ENCODE measurements at regions of chr3 and their contacts with region 1.

Region 1: DNA sequence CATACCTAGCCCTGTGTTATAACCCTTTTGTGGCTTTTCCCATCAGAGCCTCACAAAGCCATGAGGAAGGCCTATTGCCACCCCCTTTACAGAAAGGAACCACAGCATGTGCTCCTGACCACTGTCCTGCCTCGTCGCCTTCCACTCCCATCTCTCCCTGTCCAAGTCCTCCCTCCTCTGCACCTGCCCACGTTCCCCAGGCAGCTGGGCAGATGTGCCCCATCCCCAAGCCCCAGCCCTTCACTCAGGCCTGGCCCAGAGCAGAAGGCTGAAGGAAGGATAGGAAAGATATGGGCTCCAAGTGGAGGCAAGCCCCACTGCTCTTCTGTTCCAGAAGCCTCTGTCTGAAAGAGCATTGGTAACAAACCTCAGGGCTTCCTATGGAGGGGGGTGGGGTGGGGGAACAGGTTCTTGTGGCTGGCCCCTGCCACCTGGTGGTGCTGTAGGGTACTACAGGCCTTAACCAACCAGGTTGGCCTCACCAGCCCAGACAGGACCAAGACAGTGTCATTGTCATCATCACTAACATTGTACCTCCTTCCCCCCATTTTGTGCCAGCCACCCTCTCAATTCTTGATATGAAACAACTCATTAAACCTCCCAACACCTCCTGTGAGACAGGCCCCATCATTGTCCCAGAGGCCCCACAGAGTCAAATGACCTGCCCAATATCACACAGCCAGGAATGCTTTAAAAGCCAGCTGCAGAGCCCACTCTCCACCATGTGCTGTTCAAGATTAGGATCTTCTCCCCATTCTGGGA is 10.0 kb downstream of the POC1A start:
- DNase-seq: peak; percentile 89
- ATAC-seq: peak; percentile 93
- H3K4me3 ChIP-seq: no peak overlapping the region
- H3K27ac ChIP-seq: no peak overlapping the region
- H3K4me1 ChIP-seq: peaks cover 5% of the 10 kb centered on the region
- H3K27me3 ChIP-seq: no peaks in the 10 kb centered on the region
- CTCF ChIP-seq: peak; percentile 95

Region 2: DNA sequence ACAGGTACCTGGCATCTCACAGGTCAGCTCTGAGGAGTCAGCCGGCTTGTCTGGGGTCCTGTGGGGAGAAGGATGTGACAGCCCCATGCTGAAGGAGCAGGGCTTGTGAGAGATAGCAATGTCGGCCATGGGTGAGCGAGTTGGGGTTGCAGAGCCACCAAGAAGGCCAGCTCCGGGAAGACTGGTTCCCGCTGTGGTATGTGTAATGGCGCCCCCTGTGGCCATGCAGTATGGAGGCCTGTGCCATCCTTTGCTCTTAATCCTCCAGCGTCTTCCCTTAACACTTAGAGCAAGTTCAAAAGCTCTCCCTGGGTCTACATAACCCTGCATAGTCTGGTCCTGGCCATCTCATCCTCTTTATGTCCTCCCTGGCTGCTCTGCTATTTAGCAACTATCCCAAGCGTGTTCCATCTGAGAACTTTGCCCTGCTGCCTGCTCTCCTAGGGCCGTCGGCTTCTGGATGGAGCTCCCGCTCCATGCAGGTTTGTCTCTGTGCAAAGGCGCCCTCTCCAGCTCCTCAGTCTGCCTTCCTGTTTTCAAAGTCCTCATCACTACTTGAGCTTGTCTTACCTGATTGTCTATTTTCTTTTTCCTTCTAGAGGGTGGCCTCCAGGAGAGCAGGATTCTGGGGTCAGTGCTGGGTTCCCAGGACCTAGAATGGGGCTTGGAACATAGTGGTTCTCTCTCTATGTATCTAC is 324.4 kb before region 1 on chr3:
- intact Hi-C with region 1: no loop called
- DNase-seq: no peak
- ATAC-seq: no peak
- H3K4me3 ChIP-seq: no peak overlapping the region
- H3K27ac ChIP-seq: no peak overlapping the region
- H3K4me1 ChIP-seq: no peaks in the 10 kb centered on the region
- H3K27me3 ChIP-seq: peaks cover 15% of the 10 kb centered on the region
- CTCF ChIP-seq: no peak

Region 3: DNA sequence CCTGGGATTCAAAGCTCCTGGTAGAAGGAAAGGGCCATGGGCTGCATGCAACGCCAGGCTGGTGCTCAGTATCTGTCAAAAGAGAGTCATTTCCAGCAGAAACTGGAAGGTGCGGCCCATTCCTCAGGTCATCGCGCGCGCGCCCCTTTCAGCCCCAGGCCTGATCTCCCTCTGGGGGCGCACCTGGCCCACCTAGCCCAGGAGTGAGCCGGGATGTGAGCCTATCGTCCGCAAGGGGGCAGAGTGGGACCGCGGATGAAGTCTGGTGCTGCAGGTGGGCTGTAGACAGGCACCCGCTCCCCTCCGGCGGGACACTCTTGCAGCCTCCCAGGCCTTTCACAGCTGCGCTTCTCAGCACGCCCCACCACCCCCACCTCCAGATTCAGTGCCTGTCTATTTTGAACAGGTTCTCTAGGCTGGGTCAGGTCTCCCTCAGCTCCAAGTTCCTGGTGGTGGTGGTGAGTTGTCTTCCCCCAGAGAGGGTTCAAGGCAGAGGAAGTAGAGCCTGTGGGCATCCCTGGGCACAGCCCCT is 142.7 kb before region 1 on chr3:
- intact Hi-C with region 1: loop called (anchors 10 kb)
- DNase-seq: peak; percentile 83
- ATAC-seq: peak; percentile 82 to 83
- H3K4me3 ChIP-seq: no peak overlapping the region
- H3K27ac ChIP-seq: no peak overlapping the region
- H3K4me1 ChIP-seq: peaks cover 32% of the 10 kb centered on the region
- H3K27me3 ChIP-seq: no peaks in the 10 kb centered on the region
- CTCF ChIP-seq: peak; percentile 93

Region 4: GRCh38 chr3:52278510-52279069 is 134.4 kb after region 1 on chr3 and contains the start of gene WDR82:
- intact Hi-C with region 1: no loop called
- DNase-seq: peak; percentile 99
- ATAC-seq: peak; percentile 97 to 98
- H3K4me3 ChIP-seq: peak within 1 kb of the TSS; percentile 92
- H3K27ac ChIP-seq: peak within 1 kb of the TSS; percentile 96
- H3K4me1 ChIP-seq: peaks cover 53% of the 10 kb centered on the region
- H3K27me3 ChIP-seq: no peaks in the 10 kb centered on the region
- CTCF ChIP-seq: peak; percentile 55
- total RNA-seq, gene WDR82: 60.2 TPM

Measured in lower lobe of right lung (tissue), 2 donors.